ENCODE measurements at regions of chr12 and their contacts with region 1.

Region 1: GRCh38 chr12:125100551-125101434 is 35.6 kb downstream of the AACS start:
- DNase-seq: no peak
- ATAC-seq: no peak
- H3K4me3 ChIP-seq: no peak overlapping the region
- H3K27ac ChIP-seq: no peak overlapping the region
- H3K4me1 ChIP-seq: no peaks in the 10 kb centered on the region
- H3K27me3 ChIP-seq: no peaks in the 10 kb centered on the region
- CTCF ChIP-seq: no peak

Region 2: DNA sequence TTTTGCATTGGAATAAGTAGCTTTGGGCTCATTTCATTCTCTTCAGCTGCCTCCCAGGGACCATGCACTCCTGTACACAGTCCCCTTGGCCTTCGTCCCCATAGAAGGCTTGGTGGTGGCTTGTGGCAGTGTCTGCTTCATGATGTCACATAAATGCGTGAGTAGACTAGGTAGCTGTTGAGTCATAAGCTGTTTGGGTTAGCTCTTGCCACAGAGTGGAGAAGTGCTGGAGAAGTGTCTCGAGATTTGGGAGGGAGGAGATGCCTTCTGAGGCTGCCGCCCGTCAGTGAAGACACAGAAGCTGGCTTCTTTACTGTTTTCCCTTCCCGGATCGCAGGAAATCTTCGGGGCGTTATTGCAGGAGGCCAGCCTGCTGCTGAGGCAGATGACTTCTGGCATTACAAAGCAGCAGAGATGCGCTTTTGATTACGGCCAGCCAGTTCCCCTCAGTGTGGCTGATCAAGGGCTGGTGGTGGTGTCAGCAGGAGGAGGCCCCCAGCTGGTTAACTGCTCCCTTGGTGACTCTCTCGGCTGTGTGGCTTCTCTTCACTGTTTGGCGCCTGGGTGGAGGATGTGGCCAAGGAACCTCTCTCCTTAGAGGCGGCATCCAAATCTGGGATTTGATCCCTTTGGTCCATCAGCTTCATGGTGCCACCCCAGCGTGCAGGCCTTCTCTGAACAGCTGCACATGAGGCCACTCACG is 32.1 kb after region 1 on chr12:
- CTCF ChIA-PET with region 1: no interaction called
- POLR2A ChIA-PET with region 1: interaction called, 17 read pairs
- in situ Hi-C with region 1: no loop called
- intact Hi-C with region 1: no loop called
- DNase-seq: no peak
- ATAC-seq: no peak
- H3K4me3 ChIP-seq: no peak overlapping the region
- H3K27ac ChIP-seq: no peak overlapping the region
- H3K4me1 ChIP-seq: no peaks in the 10 kb centered on the region
- H3K27me3 ChIP-seq: no peaks in the 10 kb centered on the region
- CTCF ChIP-seq: no peak